Right ventricle myocardium inferior (tissue), 1 donor: ENCODE measurements at regions of chr3 and their contacts with region 1.

Region 1: GRCh38 chr3:151282921-151283320 is 4.6 kb upstream of the P2RY14 start:
- DNase-seq: no peak
- ATAC-seq: peak; percentile 33

Region 2: GRCh38 chr3:151168269-151169094 is 114.4 kb before region 1 on chr3:
- intact Hi-C with region 1: loop called (anchors 1 kb)
- DNase-seq: peak; percentile 88
- ATAC-seq: peak; percentile 55